ENCODE measurements at regions of chr22 and their contacts with region 1.

Region 1: DNA sequence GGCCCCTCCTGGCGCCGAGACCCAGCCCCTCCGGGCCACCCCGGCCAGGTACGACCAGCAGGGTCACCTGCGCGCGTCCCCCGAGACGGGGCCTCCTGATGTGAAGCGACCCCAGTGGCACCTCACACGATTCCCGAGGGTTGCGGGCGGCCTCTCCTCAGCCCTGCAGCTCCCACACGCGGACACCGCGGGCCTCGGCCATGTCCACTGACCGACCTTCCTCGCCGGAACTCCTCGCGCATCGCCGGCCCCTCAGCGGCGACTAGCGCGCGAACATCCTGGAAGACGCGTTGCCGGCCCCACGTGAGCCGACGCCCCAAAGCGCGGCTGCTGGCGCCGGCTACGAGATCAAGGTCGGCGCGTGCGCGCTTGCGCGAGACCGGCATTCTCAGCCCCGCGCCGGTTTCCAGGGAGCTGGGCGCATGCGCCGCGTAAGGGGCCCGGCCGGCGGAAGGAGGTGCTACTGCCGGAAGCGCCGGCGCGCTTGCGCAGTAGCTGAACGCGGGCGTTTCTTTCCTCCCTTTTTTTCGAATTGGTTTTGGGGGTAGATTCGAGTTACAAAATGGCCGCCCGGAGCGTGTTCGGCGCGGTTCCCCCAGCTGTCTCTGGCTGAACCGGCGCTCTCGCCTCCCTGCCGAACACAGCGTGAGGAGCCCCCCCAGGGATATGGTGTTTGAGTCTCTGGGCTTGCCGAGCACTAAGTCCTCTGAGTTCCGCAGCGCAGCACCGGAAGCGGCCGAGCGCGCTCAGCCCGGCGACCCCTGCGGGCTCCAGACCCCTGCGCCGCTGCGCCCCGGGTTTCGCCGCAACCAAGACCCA is at the start of gene NUP50:
- DNase-seq: peak; percentile 89 to 90
- H3K4me3 ChIP-seq: peak within 1 kb of the TSS; percentile 93 to 99 (median 96)
- H3K27ac ChIP-seq: peak within 1 kb of the TSS; percentile 75 to 89
- H3K4me1 ChIP-seq: no peaks in the 10 kb centered on the region
- H3K27me3 ChIP-seq: no peaks in the 10 kb centered on the region
- CTCF ChIP-seq: no peak
- POLR2A ChIP-seq: no peak
- total RNA-seq, gene NUP50: 40.6 to 53.9 (median 49.2) TPM

Region 2: DNA sequence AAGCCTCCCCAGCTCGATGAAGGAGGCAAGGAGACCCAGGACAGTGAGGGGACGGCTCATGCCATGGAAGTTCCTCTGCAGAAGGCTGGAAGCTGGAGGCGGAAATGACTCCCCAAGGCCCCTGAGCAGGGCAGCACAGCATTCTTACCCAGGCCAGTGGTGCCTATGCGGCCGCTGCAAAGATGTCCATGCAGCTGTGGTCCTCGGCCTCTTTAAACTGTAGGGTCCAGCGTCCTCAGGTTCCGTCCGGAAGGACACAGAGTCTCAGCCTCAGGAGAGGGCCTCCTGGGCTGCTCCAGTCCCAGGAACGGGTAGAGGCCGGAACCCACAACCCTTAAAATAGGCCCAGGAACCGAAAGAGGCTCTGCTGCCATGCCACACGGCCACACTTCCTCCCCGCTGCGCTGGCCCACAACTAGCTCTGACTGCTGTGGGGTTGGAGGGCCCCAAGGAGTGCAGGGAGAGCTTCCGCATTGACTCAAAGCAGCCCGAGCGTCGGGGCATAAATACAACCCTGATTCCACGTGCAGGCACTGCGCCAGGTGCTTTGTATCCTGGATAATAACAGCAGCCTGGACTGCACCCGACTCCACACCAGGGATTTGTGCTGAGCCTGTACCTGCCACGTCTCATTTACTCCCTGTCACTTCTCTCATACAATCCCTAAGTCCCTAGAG is 71.6 kb after region 1 on chr22:
- intact Hi-C with region 1: loop called (anchors 10 kb)
- DNase-seq: no peak
- H3K4me3 ChIP-seq: no peak overlapping the region
- H3K27ac ChIP-seq: peak overlapping the region; percentile 17 to 58
- H3K4me1 ChIP-seq: peaks cover 0 to 3% of the 10 kb centered on the region in 2 donors
- H3K27me3 ChIP-seq: no peaks in the 10 kb centered on the region
- CTCF ChIP-seq: no peak
- POLR2A ChIP-seq: no peak

Region 3: GRCh38 chr22:46219636-46220035 is 1056.0 kb after region 1 on chr22:
- intact Hi-C with region 1: loop called (anchors 10 kb)
- DNase-seq: no peak
- H3K4me3 ChIP-seq: no peak overlapping the region
- H3K27ac ChIP-seq: no peak overlapping the region
- H3K4me1 ChIP-seq: no peaks in the 10 kb centered on the region
- H3K27me3 ChIP-seq: no peaks in the 10 kb centered on the region
- CTCF ChIP-seq: no peak
- POLR2A ChIP-seq: no peak

Measured in breast epithelium (tissue), 4 donors.